Mucosa of descending colon (tissue), 3 donors: ENCODE measurements at regions of chr19 and their contacts with region 1.

Region 1: GRCh38 chr19:2151339-2152229 is at the start of gene AP3D1:
- DNase-seq: peak; percentile 100
- ATAC-seq: peak; percentile 91
- H3K4me3 ChIP-seq: peak within 1 kb of the TSS; percentile 94
- H3K4me1 ChIP-seq: peaks cover 30% of the 10 kb centered on the region
- CTCF ChIP-seq: peak; percentile 18
- total RNA-seq, gene AP3D1: 103 to 120 (median 103) TPM

Region 2: DNA sequence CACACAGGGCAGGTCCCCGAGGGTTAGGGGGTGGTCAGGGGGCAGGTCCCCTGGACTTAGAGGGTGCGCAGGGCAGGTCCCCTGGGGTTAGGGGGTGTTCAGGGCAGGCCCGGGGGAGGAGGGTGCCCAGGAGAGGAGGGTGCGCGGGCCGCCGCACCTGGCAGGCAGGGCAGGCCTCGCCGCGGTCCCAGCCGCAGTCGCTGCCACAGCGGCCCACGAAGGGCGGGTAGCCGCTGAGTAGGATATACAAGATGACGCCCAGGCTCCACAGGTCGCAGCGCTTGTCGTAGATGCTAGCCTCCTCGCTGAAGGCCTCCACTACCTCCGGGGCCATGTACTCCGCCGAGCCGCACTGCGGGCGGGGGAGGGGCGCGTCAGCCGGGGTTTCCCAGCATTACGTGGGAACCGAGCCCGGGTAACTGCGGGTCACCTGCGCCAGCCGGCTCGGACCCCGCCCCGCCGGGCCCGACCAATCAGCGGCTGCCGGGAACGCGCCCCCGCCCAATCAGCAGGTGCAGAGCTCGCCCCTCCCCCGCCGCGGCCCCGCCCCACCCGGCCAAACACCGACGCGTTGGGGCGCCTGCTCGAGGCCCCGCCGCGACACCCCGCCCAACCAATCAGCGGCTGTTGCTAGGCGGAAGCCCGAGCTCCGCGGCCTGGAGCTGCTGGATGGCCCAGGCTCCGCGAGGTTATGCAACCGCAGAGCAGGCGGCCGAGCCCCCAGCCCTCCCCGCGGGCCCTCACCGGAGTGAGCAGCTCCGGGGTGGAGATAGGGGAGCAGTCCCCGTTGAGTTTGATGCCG is 109.7 kb before region 1 on chr19:
- intact Hi-C with region 1: no loop called
- DNase-seq: peak; percentile 99 to 100 (median 99)
- ATAC-seq: peak; percentile 93
- H3K4me3 ChIP-seq: peak overlapping the region; percentile 5
- H3K4me1 ChIP-seq: peaks cover 46% of the 10 kb centered on the region
- CTCF ChIP-seq: no peak

Region 3: GRCh38 chr19:2273356-2274184 is 122.0 kb after region 1 on chr19:
- intact Hi-C with region 1: loop called in 1 of 2 experiments (anchors 10 kb)
- DNase-seq: peak; percentile 82 to 92 (median 91)
- ATAC-seq: peak; percentile 46
- H3K4me3 ChIP-seq: no peak overlapping the region
- H3K4me1 ChIP-seq: peaks cover 55% of the 10 kb centered on the region
- CTCF ChIP-seq: peak; percentile 91